Right ventricle myocardium inferior (tissue), 1 donor: ENCODE measurements at regions of chr10 and their contacts with region 1.

Region 1: GRCh38 chr10:13882112-13882711 is 295.4 kb downstream of the PRPF18 start:
- DNase-seq: no peak
- ATAC-seq: peak; percentile 30

Region 2: DNA sequence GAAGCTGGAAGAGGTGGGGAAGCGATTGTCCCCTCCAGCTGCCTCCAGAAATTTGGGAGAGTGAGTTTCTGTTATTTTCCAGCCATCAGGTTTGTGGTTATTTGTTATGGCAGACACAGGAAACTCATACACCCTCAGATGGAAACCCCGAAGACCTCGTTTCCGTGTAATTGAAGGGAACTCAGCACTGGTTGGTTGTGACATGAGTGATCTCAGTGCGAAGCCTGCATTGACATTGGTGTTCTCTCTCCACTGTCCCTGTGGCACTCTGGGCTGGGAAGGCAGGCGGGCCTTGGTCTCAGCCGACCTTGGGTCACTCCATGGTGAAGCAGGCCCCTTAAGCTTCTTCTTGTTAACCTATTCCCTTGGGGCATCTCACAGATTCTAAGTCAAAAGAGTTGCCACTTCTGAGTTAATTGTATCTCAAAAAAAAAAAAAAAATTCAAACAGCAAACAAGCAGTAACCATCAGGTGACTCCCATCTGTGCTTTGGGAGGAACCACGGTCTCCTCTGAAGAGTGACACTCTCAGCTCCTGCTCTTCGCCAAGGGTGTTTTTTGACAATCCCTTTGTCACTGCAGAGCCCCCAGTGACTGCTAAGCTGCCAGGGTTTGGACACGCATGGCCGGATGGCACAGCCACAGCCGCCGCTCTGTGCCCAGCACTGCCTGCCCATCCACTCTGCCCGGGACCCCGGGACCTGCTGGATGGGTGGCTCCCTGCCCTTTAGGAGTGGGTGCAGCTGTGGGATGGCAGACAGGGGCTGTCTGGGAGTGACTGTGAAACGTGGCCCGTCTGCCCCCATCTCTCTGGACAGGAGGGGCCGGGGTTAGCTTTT is 61.9 kb before region 1 on chr10:
- intact Hi-C with region 1: loop called (anchors 5 kb)
- DNase-seq: no peak
- ATAC-seq: no peak

Region 3: DNA sequence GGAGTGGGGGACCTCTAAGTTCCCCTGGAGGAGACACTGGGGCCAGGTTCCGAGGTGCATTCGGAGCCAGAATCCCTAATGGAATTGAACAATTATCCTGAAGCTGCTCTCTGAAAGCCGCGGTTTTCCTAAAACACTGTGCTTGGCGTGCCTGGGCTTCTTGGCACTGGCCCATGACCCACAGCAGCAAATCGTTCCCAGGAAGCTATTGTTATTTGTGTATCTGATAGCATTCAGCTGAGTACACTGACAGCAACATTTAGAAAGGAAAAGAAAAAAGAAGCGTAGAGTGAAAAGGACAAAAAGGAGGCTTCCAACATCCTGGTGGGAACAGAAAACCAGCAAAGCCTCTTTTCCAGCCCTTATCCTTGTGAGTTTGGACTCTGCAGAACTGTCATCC is 108.7 kb after region 1 on chr10:
- intact Hi-C with region 1: loop called (anchors 5 kb)
- DNase-seq: peak; percentile 78
- ATAC-seq: peak; percentile 20

Region 4: DNA sequence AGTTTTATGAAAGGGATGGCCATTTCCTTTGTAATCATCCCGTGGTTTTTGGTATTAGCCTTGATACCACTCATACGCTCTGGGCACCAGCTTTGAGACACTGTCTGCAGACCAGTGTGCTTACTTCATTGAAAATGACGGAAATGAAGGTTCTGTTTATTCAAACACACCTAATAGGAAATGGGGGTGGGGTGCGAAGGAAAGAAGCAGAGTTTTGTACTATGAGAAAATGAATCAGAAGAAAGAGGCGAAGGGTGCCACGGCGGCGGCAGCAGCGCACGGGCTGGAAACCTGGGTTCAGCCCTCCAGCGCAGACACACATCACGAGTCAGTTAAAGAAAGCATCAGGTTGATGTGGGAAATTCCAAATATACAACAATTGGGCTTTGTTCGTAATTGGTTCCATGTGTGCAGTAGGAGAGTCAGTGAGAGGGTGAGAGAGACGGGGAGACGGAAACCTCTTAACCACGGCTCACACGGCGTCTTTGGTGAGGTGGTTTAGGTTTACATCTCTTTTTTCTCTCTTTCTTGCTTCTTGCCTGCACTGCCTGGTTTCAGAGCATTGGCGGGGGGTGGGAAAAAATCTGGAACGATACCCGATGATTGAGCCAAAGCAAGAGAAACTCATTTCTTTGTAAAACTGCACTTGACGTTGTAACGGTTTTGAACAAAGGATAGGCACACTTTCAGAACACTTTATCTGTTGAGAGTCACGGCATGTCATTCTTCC is 127.3 kb after region 1 on chr10:
- intact Hi-C with region 1: loop called (anchors 5 kb)
- DNase-seq: no peak
- ATAC-seq: no peak

Region 5: DNA sequence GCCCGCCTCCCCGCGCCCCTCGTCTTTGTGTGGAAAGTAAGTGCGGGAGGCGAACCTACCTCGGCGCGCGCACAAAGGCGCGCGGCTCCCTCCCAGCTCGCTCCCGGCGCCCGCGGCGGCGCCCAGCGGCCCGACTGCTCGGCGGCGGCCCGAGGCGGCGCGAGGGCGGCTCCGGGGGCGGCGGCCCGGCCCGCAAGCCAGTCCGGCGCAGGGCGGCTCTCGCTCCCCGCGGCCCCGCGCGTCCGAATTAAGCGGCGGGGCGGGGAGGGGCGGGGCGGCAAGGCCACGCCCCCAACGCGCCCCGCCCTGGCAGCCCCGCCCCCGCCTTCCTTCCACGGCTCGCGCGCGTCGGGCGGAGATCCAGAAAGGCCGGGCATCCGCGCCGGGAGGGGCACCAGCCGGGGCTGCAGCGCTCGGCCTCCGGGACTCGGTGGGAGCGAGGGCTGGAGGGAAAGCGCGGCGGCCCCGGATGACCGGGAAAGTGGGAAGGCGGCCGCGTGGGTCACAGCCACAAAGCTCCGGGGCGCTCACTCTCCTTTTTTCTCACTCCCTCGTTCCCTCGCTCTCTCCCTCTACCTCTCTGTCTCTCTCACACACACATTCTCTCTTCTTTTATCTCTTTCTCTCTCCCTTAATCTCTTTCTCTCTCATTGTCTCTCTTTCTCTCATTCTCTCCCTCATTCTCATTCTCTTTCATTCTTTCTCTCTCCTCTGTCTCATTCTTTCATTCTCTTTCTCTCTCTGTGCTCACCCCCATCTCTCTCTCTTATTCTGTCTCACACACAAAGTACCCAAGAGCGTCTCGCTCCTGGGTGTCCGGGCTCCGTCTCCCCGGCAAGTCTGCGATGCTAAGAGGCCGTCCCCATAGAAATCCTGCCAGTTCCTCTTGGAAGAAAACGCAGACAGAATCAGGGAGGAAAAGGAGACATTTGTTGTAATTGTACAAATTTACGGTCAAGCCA is 722.2 kb after region 1 on chr10:
- intact Hi-C with region 1: no loop called
- DNase-seq: peak; percentile 93
- ATAC-seq: peak; percentile 98